ENCODE measurements at regions of chr4 and their contacts with region 1.

Region 1: DNA sequence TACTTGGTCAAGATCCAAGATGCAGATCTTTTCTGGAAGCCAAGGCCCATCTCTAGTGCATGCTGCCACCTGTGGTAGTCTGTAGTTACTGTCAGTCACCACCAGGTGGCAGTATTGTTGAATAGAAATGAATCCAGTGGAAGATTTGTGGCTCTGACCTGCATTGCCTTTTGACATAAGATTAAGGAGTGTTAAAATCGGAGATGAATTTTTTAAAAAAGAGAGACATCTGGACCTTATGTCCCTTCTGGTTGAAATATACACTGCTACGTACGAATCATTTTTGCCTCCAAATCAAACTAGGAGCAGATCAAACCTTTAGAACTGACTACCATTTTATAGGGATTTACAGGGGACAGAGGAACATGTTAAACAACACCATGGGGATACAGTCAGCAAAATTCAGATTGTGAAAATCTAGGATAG is 46.9 kb upstream of the RHOH start:
- DNase-seq: peak; percentile 72
- H3K4me3 ChIP-seq: no peak overlapping the region
- H3K27ac ChIP-seq: no peak overlapping the region
- H3K4me1 ChIP-seq: no peaks in the 10 kb centered on the region
- H3K27me3 ChIP-seq: no peaks in the 10 kb centered on the region
- CTCF ChIP-seq: peak; percentile 72 to 79

Region 2: DNA sequence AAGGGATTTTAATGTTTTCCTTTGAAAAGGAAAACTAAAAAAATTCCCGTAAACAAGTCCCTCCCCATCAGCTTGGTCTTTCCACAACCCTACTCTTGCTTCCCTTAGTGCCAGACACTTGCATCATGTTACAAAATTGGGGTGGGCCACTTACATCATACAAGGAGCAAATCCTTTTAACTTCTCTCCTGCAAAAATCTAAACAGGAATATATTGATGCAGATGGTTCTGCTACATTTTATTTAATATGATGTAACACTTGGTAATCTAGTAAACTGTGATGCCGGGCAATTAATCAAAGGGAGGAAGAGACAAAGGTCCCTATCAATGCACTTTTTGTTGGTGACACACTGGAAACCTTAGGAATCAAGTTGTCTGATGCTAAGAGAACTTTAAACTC is 326.8 kb before region 1 on chr4:
- CTCF ChIA-PET with region 1: no interaction called
- dilution Hi-C with region 1: no loop called
- in situ Hi-C with region 1: no loop called
- intact Hi-C with region 1: no loop called
- DNase-seq: no peak
- H3K4me3 ChIP-seq: no peak overlapping the region
- H3K27ac ChIP-seq: no peak overlapping the region
- H3K4me1 ChIP-seq: no peaks in the 10 kb centered on the region
- H3K27me3 ChIP-seq: no peaks in the 10 kb centered on the region
- CTCF ChIP-seq: no peak

Region 3: GRCh38 chr4:39900966-39901365 is 249.0 kb before region 1 on chr4:
- CTCF ChIA-PET with region 1: no interaction called
- dilution Hi-C with region 1: no loop called
- in situ Hi-C with region 1: no loop called
- intact Hi-C with region 1: no loop called
- DNase-seq: no peak
- H3K4me3 ChIP-seq: no peak overlapping the region
- H3K27ac ChIP-seq: no peak overlapping the region
- H3K4me1 ChIP-seq: no peaks in the 10 kb centered on the region
- H3K27me3 ChIP-seq: no peaks in the 10 kb centered on the region
- CTCF ChIP-seq: no peak

Region 4: DNA sequence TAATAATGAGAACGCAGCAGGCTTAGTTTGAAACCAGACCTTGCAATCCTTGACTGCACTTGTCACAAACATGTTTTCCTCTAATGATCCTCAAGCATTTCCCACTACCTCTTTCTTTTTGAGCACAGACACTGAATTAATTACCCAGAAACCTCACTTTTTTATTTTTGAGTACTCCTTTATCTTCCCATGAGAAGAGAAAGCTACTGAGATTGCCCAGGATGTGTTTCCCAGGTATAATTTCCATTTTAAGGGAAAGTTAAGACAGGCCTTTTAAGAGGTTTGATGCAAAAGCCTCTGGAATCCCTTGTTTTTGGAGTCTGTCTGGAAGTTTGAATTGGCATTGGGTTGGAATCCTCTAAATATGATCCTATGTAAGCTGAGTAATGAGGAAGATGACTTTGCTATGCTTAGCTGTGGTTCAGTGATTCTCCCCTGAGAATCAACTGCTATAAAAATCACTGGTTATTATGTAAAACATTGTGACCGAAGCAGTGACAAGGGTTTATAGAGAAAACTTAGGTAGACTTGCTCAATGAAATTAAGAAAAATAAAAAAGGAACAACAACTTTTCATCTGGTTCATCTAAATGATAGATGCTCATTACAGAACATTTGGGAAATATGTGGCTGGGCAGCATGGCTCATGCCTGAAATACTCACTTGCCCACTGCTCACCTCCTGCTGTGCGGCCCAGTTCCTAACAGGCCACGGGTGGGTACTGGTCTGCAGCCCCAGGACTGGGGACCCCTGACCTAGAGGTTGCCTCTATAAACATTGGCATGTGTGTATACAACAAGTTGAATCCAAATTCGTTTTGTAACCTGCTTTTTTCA is 36.1 kb after region 1 on chr4:
- CTCF ChIA-PET with region 1: no interaction called
- dilution Hi-C with region 1: no loop called
- in situ Hi-C with region 1: no loop called
- intact Hi-C with region 1: no loop called
- DNase-seq: no peak
- H3K4me3 ChIP-seq: no peak overlapping the region
- H3K27ac ChIP-seq: peak overlapping the region; percentile 98
- H3K4me1 ChIP-seq: peaks cover 34% of the 10 kb centered on the region
- H3K27me3 ChIP-seq: no peaks in the 10 kb centered on the region
- CTCF ChIP-seq: no peak

Region 5: GRCh38 chr4:40301603-40302002 is 151.6 kb after region 1 on chr4:
- CTCF ChIA-PET with region 1: no interaction called
- dilution Hi-C with region 1: no loop called
- in situ Hi-C with region 1: no loop called
- intact Hi-C with region 1: loop called (anchors 1 kb)
- DNase-seq: no peak
- H3K4me3 ChIP-seq: no peak overlapping the region
- H3K27ac ChIP-seq: no peak overlapping the region
- H3K4me1 ChIP-seq: peaks cover 8% of the 10 kb centered on the region
- H3K27me3 ChIP-seq: no peaks in the 10 kb centered on the region
- CTCF ChIP-seq: no peak

Region 6: DNA sequence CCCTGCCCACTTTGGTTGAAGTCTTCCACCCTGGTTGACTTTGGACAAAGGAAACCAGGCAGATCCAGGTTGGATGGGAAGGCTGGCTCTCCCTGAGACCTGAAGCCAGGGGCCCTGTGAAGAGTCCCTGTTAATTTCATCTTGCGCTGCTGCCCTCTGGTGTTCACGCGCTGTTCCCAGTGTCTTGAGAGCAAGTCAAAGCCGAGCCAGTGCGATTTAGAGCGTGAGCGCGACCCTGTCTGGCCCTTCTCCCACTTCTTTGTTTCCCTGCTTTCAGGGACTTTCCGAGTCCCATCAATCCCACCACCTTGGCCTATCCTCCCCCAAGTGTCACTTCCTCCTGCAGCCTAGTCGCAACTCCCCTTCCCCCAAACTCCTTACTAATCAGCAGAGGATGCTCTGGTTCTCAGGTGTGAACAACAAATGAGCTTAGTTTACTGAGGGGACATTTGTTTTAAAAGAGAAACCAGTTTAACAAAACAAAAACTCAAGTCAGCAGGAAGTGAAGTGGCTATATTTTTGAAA is 159.3 kb after region 1 on chr4:
- CTCF ChIA-PET with region 1: no interaction called
- dilution Hi-C with region 1: no loop called
- in situ Hi-C with region 1: no loop called
- intact Hi-C with region 1: loop called (anchors 1 kb)
- DNase-seq: peak; percentile 74
- H3K4me3 ChIP-seq: peak overlapping the region in 1 of 3 experiments; percentile 29
- H3K27ac ChIP-seq: peak overlapping the region; percentile 22
- H3K4me1 ChIP-seq: no peaks in the 10 kb centered on the region
- H3K27me3 ChIP-seq: no peaks in the 10 kb centered on the region
- CTCF ChIP-seq: peak; percentile 81 to 93

Region 7: GRCh38 chr4:40325189-40326019 is 175.4 kb after region 1 on chr4:
- CTCF ChIA-PET with region 1: interaction called, 3 read pairs
- dilution Hi-C with region 1: no loop called
- in situ Hi-C with region 1: no loop called
- intact Hi-C with region 1: loop called (anchors 1 kb)
- DNase-seq: peak; percentile 52
- H3K4me3 ChIP-seq: no peak overlapping the region
- H3K27ac ChIP-seq: no peak overlapping the region
- H3K4me1 ChIP-seq: peaks cover 13% of the 10 kb centered on the region
- H3K27me3 ChIP-seq: no peaks in the 10 kb centered on the region
- CTCF ChIP-seq: peak; percentile 91 to 95

Region 8: GRCh38 chr4:40648742-40649281 is 498.8 kb after region 1 on chr4:
- CTCF ChIA-PET with region 1: no interaction called
- dilution Hi-C with region 1: no loop called
- in situ Hi-C with region 1: no loop called
- intact Hi-C with region 1: no loop called
- DNase-seq: no peak
- H3K4me3 ChIP-seq: no peak overlapping the region
- H3K27ac ChIP-seq: no peak overlapping the region
- H3K4me1 ChIP-seq: no peaks in the 10 kb centered on the region
- H3K27me3 ChIP-seq: no peaks in the 10 kb centered on the region
- CTCF ChIP-seq: no peak